ENCODE measurements at regions of chr3 and their contacts with region 1.

Region 1: DNA sequence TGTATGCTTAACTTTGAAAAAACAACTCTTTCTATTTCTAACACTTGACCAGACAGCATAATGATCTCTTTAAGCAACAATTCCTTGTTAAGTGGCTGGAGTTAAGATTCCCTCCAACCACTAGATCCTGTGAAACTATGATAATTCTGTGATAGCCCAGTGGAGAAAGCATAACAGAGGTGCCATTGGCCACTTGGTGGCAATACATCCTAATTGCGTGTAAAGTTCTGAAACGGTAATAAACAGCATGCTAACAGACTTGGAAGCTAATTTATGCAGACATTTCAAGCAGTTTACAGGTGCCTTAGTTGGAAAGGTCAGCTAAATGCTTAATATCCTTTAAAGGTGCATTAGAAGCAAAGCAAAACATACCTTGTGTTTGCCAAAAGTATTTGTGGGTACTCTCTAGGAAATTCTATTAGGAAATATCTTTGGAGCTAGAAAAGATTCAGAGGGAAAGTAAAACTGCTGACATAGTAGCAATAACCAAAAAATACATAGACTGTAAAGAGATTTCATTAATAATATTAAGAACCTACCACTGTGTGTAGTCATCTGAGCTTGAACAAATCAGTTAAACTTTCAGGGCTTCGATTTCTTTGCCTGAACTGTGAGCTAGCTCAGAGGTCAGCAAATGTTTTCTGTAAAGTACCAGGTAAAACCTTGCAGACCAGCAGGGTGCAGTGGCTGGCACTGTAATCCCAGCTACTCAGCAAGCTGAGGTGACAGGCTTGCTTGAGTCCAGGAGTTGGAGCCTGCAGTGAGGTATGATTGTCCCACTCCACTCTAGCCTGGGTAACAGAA is 19.0 kb upstream of the CSTA start:
- DNase-seq: no peak
- ATAC-seq: peak; percentile 93
- H3K4me3 ChIP-seq: no peak overlapping the region
- H3K27ac ChIP-seq: no peak overlapping the region
- H3K4me1 ChIP-seq: peaks cover 30% of the 10 kb centered on the region
- H3K27me3 ChIP-seq: no peaks in the 10 kb centered on the region
- CTCF ChIP-seq: peak; percentile 30 to 57 (median 35); a peak in 4 of 6 replicates
- EP300 ChIP-seq: no peak
- POLR2A ChIP-seq: no peak
- RAD21 ChIP-seq: peak; percentile 62

Region 2: GRCh38 chr3:121545574-121546455 is 760.2 kb before region 1 on chr3 and contains the start of gene POLQ:
- CTCF ChIA-PET with region 1: interaction called, 12 read pairs
- POLR2A ChIA-PET with region 1: no interaction called
- RAD21 ChIA-PET with region 1: interaction called, 3 read pairs
- SMC1A ChIA-PET with region 1: interaction called, 5 read pairs
- in situ Hi-C with region 1: no loop called
- intact Hi-C with region 1: loop called (anchors 2 kb)
- DNase-seq: peak; percentile 77
- ATAC-seq: peak; percentile 82
- H3K4me3 ChIP-seq: peak within 1 kb of the TSS; percentile 76
- H3K27ac ChIP-seq: peak within 1 kb of the TSS; percentile 84
- H3K4me1 ChIP-seq: peaks cover 16% of the 10 kb centered on the region
- H3K27me3 ChIP-seq: no peaks in the 10 kb centered on the region
- CTCF ChIP-seq: no peak
- EP300 ChIP-seq: 0 out of 4 replicates have a peak, but pooled peaks of 1 of the 2 experiments have one; percentile 18
- POLR2A ChIP-seq: peak; percentile 83
- RAD21 ChIP-seq: no peak
- polyA plus RNA-seq, gene POLQ: 3.3 to 3.4 TPM

Region 3: DNA sequence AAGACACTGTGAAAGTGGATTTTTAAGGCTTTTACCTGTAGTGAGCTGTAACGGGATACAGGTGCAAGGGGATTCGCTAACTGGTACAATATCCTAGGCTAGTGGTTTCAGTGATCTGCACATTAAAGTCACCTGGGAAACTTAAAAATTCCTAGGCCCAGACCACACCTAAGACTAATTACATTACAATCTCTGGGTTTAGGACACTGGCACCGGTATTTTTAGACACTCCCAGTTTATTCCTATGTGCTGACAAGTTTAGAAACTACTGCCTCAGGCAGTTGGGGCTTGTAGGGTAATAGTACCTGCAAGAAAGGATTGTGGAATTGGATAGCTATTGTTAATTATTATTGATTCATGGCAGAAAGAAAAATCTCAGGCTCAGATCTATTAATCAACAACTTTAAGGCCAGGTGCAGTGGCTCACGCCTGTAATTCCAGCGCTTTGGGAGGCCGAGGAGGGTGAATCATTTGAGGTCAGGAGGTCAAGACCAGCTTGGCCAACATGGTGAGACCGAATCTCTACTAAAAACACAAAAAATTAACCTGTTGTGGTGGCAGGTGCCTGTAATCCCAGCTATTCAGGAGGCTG is 173.0 kb before region 1 on chr3:
- CTCF ChIA-PET with region 1: no interaction called
- POLR2A ChIA-PET with region 1: no interaction called
- RAD21 ChIA-PET with region 1: no interaction called
- SMC1A ChIA-PET with region 1: no interaction called
- in situ Hi-C with region 1: no loop called
- intact Hi-C with region 1: no loop called
- DNase-seq: no peak
- ATAC-seq: no peak
- H3K4me3 ChIP-seq: no peak overlapping the region
- H3K27ac ChIP-seq: no peak overlapping the region
- H3K4me1 ChIP-seq: no peaks in the 10 kb centered on the region
- H3K27me3 ChIP-seq: no peaks in the 10 kb centered on the region
- CTCF ChIP-seq: no peak
- EP300 ChIP-seq: no peak
- POLR2A ChIP-seq: no peak
- RAD21 ChIP-seq: no peak

Region 4: GRCh38 chr3:122271246-122271898 is 34.6 kb before region 1 on chr3:
- CTCF ChIA-PET with region 1: interaction called, 15 read pairs
- POLR2A ChIA-PET with region 1: interaction called, 5 read pairs
- RAD21 ChIA-PET with region 1: interaction called, 41 read pairs
- SMC1A ChIA-PET with region 1: interaction called, 204 read pairs
- in situ Hi-C with region 1: no loop called
- intact Hi-C with region 1: no loop called
- DNase-seq: no peak
- ATAC-seq: peak; percentile 58
- H3K4me3 ChIP-seq: peak overlapping the region; percentile 17; the same call in 1 of the 2 replicates
- H3K27ac ChIP-seq: peak overlapping the region; percentile 43
- H3K4me1 ChIP-seq: peaks cover 38% of the 10 kb centered on the region
- H3K27me3 ChIP-seq: no peaks in the 10 kb centered on the region
- CTCF ChIP-seq: no peak
- EP300 ChIP-seq: peak in 1 of 2 experiments; percentile 85; a peak in 3 of 4 replicates
- POLR2A ChIP-seq: no peak
- RAD21 ChIP-seq: no peak

Region 5: DNA sequence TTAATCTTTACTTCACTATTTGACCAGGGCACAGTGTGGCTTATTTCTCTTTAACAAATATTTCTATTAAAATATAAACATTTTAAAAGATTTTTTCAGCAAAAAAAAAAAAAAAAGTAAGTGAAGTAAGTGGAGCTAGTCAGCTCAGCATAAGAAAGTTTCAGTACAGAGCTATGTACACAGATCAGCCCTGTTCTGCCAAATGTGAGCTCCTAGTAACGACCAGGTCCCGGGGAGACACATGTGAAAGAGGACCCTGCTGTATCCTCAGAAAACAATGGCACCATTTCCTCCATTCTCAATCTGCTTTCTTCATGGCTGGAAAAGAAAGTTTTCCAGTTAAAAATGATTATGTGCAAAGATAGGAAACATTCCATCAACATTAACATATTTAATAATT is 32.4 kb after region 1 on chr3:
- CTCF ChIA-PET with region 1: interaction called, 10 read pairs
- POLR2A ChIA-PET with region 1: interaction called, 5 read pairs
- RAD21 ChIA-PET with region 1: interaction called, 14 read pairs
- SMC1A ChIA-PET with region 1: interaction called, 18 read pairs
- in situ Hi-C with region 1: no loop called
- intact Hi-C with region 1: no loop called
- DNase-seq: no peak
- ATAC-seq: no peak
- H3K4me3 ChIP-seq: no peak overlapping the region
- H3K27ac ChIP-seq: no peak overlapping the region
- H3K4me1 ChIP-seq: no peaks in the 10 kb centered on the region
- H3K27me3 ChIP-seq: no peaks in the 10 kb centered on the region
- CTCF ChIP-seq: no peak
- EP300 ChIP-seq: no peak
- POLR2A ChIP-seq: no peak
- RAD21 ChIP-seq: no peak

Region 6: DNA sequence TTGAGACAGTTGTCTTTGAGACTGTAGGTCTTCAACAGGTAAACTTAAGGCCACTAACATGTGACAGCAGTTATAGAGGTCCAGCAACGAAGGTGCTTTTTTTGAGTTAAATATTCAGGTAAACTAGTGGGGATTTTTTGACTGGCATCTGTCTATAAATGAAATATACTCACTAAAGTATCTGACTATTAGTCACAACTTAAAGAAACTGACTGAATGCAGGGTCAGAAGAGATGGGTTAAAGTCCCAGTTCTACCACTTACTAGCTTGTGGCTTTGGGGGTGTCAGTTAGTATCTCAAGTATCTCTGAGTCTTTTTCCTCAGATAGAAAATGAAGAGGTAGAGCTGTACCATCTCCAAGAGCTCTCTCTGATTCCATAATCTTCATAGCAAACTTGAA is 59.1 kb after region 1 on chr3:
- CTCF ChIA-PET with region 1: interaction called, 192 read pairs
- POLR2A ChIA-PET with region 1: interaction called, 4 read pairs
- RAD21 ChIA-PET with region 1: interaction called, 32 read pairs
- SMC1A ChIA-PET with region 1: interaction called, 49 read pairs
- in situ Hi-C with region 1: no loop called
- intact Hi-C with region 1: no loop called
- DNase-seq: no peak
- ATAC-seq: peak; percentile 81
- H3K4me3 ChIP-seq: no peak overlapping the region
- H3K27ac ChIP-seq: peak overlapping the region; percentile 0; the same call in 1 of the 2 replicates
- H3K4me1 ChIP-seq: no peaks in the 10 kb centered on the region
- H3K27me3 ChIP-seq: no peaks in the 10 kb centered on the region
- CTCF ChIP-seq: no peak
- EP300 ChIP-seq: no peak
- POLR2A ChIP-seq: no peak
- RAD21 ChIP-seq: no peak

Region 7: DNA sequence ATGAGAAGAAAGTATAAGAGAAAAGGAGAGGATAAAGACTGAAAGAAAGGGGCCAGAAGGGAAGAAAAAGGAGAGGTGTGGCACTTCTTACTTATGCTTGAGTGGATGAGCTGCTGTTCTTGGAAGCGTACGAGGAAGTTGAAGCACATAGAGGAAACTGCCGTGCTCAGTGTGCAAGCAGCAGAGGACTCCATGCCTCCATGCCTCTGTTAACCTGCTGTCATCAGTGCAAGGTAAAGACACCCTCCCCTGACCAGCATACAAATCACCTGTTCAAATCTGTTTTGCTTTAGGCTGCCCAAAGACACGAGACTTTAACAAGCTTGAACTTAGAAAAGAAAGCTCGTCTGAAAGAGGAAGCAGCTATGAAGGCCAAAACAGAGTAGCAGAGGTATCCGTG is 103.4 kb after region 1 on chr3:
- CTCF ChIA-PET with region 1: interaction called, 13 read pairs
- POLR2A ChIA-PET with region 1: interaction called, 3 read pairs
- RAD21 ChIA-PET with region 1: interaction called, 7 read pairs
- SMC1A ChIA-PET with region 1: interaction called, 18 read pairs
- in situ Hi-C with region 1: no loop called
- intact Hi-C with region 1: no loop called
- DNase-seq: no peak
- ATAC-seq: peak; percentile 39
- H3K4me3 ChIP-seq: no peak overlapping the region
- H3K27ac ChIP-seq: no peak overlapping the region
- H3K4me1 ChIP-seq: peaks cover 2% of the 10 kb centered on the region; the same call in 1 of the 2 replicates
- H3K27me3 ChIP-seq: no peaks in the 10 kb centered on the region
- CTCF ChIP-seq: no peak
- EP300 ChIP-seq: no peak
- POLR2A ChIP-seq: no peak
- RAD21 ChIP-seq: no peak